ENCODE measurements at regions of chr9 and their contacts with region 1.

Region 1: DNA sequence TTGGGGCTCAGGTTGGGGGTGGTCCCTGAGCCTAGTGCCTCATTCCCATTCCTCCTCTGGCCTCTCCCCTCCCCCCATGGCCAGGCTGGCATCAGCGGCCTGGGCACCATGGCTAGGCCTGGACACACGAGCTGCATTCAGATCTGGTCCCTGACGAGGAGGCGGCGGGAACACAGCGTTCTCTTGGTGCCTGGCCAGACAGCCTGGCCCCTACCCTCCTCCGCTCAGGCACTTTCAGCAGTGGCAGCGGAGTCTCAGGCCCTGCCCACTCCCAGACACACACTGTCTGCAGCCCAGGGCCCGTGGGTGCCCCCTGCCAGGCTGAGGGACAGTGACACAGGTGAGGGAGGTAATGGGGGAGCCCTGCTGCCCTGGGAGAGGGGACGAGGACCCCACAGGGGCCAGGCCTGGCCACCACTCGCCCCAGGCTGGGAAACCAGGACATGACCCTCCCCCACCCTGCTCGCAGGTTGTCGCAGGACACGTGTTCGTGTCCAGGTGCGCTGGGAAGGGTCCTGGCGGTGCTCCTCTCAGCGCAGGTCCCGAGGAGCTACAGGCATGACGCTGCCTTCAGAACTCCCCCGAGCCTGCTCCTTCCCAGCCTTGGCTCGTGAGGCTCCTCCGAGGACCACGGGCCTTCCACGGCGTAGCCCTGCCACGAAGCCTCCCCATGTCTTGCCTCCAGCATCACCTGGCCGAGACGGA is 19.9 kb upstream of the UBAC1 start:
- DNase-seq: no peak

Region 2: GRCh38 chr9:135661816-135662560 is 319.1 kb before region 1 on chr9:
- intact Hi-C with region 1: no loop called
- DNase-seq: no peak

Region 3: GRCh38 chr9:136001231-136001630 is 20.2 kb after region 1 on chr9:
- intact Hi-C with region 1: loop called in 1 of 2 experiments (anchors 1 kb)
- DNase-seq: no peak